ENCODE measurements at regions of chr17 and their contacts with region 1.

Region 1: GRCh38 chr17:80625627-80626026 is 81.0 kb downstream of the RPTOR start:
- DNase-seq: no peak
- H3K4me3 ChIP-seq: no peak overlapping the region
- H3K4me3 Mint-ChIP-seq: no peak overlapping the region
- H3K27ac ChIP-seq: no peak overlapping the region
- H3K27ac Mint-ChIP-seq: no peak overlapping the region
- H3K4me1 ChIP-seq: no peaks in the 10 kb centered on the region
- H3K4me1 Mint-ChIP-seq: no peaks in the 10 kb centered on the region
- H3K27me3 ChIP-seq: no peaks in the 10 kb centered on the region
- H3K27me3 Mint-ChIP-seq: no peaks in the 10 kb centered on the region
- CTCF ChIP-seq: no peak

Region 2: GRCh38 chr17:80646328-80646727 is 20.7 kb after region 1 on chr17:
- intact Hi-C with region 1: loop called in 1 of 2 experiments (anchors 1 kb)
- DNase-seq: no peak
- H3K4me3 ChIP-seq: no peak overlapping the region
- H3K4me3 Mint-ChIP-seq: no peak overlapping the region
- H3K27ac ChIP-seq: no peak overlapping the region
- H3K27ac Mint-ChIP-seq: no peak overlapping the region
- H3K4me1 ChIP-seq: peaks cover 0 to 5% of the 10 kb centered on the region in 2 donors
- H3K4me1 Mint-ChIP-seq: peaks cover 2% of the 10 kb centered on the region
- H3K27me3 ChIP-seq: no peaks in the 10 kb centered on the region
- H3K27me3 Mint-ChIP-seq: no peaks in the 10 kb centered on the region
- CTCF ChIP-seq: no peak

Region 3: DNA sequence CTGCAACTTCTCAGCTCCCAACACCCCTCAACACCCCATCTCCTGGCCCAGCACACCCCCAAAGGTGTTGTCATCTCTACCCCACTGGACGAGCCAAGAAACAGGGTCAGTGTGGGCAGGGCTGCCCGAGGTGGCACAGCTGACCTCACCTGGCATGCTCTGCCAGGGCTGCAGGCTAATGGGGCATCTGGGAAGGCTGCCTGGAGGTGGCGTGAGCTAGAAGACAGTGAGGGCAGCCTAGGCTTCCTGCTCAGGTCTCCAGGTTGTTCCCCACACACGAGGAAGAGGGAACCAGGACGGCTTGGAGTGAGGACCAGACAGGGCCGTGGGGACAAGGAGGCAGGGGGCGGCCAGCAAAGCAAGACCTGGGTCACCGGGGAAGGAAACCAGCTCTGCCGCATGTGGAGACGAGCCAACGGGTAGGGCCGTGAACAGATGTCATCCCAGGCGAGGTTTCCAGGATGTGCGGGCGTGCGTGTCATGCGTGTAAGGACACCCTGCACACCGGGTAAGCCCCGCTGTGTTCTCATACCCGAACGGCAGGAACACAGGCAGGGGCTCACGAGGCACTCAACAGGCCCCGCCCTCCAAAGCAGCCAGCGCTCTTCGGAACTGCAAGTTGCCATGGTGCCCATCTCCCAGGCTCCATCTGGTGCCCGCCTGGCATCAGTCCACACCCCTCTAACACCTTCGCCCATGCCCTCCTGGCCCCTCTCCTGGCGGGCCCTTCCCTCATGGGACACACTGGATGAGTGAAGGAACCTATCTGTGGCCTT is 510.1 kb after region 1 on chr17:
- intact Hi-C with region 1: no loop called
- DNase-seq: no peak
- H3K4me3 ChIP-seq: no peak overlapping the region
- H3K4me3 Mint-ChIP-seq: no peak overlapping the region
- H3K27ac ChIP-seq: no peak overlapping the region
- H3K27ac Mint-ChIP-seq: peak overlapping the region in 1 of 7 donors; percentile 76
- H3K4me1 ChIP-seq: peaks cover 8 to 13% of the 10 kb centered on the region in 2 donors
- H3K4me1 Mint-ChIP-seq: peaks cover 7% of the 10 kb centered on the region
- H3K27me3 ChIP-seq: no peaks in the 10 kb centered on the region
- H3K27me3 Mint-ChIP-seq: peaks cover 2 to 6% (median 2%) of the 10 kb centered on the region in 3 donors
- CTCF ChIP-seq: no peak